Activated CD8-positive, alpha-beta T cell treated with anti-CD3 and anti-CD28 coated beads for 36 hours (primary cell): ENCODE measurements at regions of chr3 and their contacts with region 1.

Region 1: DNA sequence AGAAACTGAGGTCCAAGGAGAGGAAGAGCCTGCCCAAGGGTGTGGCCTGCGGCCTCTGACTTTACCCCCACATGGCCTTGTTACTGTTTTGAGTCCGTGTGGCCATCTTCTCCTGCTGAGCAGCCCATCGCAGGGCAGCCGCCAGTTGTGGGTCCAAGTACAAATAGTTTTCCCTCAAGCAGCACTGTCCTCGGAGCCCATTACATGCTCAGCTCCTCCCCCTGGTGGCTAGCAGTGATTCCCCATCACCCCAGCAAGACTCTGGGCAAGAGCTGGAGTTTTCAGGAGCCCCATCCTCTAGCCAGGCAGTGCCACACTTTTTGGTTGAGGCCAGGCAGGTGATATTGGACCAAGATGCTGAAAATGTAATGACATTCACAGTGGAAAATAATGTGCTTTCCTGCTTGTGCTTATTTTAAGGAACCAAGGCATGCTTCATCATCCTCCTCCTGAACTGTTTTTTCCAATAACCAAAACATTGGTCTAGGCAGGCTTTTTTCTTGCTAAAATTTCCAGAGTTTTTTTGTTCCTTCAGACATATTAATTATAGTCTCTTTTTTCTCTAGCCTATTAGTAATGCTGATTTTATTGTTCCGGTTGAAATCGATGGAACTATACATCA is 23.2 kb upstream of the VILL start:
- DNase-seq: peak; percentile 82
- ATAC-seq: peak; percentile 90
- H3K4me3 Mint-ChIP-seq: no peak overlapping the region
- H3K27ac Mint-ChIP-seq: no peak overlapping the region
- H3K4me1 Mint-ChIP-seq: no peaks in the 10 kb centered on the region
- H3K27me3 Mint-ChIP-seq: no peaks in the 10 kb centered on the region
- CTCF ChIP-seq: peak; percentile 71

Region 2: DNA sequence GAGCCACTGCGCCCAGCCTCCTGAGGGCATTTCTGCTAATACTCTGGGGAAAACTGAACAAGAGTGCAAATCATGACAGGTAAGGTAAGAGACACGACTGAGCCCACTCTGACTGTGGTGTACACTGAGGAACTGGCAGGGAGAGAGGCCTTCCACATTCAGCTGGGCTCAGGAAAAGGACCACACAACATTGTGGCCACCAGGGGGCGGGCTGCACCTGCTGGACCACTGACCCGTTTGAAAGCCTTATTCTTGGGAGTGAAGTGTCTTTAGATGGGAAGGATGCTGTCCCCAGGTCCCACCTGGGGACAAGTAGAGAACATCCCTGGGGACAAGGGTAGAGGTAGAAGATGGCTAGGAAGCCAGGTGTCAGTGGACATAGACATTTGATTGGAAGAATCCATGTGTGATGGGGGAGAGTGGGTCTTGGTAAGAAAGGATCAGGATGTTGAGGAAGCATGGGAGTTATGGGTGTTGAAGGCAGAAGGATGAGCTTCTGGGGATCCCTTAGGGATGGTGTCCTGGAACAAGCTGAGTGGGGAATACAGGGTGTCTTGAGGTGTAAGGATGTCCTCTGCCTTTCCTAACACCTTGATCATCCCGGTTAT is 111.9 kb before region 1 on chr3:
- CTCF ChIA-PET with region 1: interaction called, 29 read pairs
- POLR2A ChIA-PET with region 1: interaction called, 3 read pairs
- intact Hi-C with region 1: loop called (anchors 1 kb)
- DNase-seq: peak; percentile 88
- ATAC-seq: peak; percentile 37
- H3K4me3 Mint-ChIP-seq: no peak overlapping the region
- H3K27ac Mint-ChIP-seq: no peak overlapping the region
- H3K4me1 Mint-ChIP-seq: peaks cover 6% of the 10 kb centered on the region
- H3K27me3 Mint-ChIP-seq: peaks cover 1% of the 10 kb centered on the region
- CTCF ChIP-seq: peak; percentile 96

Region 3: DNA sequence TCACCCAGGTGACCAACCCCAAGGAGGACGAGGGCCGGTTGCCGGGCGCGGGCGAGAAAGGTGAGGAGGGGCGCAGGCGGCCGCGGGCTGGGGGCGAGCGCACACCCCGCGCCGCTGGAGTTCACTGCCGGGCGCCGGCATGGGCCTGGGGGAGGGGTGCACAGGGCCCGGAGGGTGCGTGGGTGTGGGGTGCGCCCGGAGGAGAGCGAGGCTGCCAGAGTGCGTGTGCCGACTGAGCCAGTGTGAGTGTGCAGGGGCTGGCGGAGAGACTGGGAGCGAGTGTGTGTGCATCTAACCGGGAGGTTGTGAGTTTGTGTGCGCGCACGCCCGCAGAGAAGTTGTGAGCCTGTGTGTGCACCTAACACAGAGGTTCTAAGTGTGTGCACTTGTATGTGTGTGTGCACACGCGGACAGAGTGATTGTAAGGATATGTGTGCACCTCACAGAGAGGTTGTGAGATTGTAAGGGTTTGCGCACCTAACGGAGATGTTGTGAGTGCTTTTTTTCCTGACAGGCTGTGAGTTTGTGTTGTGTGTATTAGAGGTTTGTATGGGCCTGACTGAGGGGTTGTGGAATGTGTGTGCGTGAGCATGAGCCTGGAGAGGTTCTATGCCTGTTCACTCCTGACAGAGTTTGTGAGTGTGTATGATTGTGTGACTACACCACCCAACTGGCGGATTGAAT is 105.0 kb before region 1 on chr3:
- CTCF ChIA-PET with region 1: interaction called, 15 read pairs
- POLR2A ChIA-PET with region 1: no interaction called
- intact Hi-C with region 1: no loop called
- DNase-seq: peak; percentile 56
- ATAC-seq: peak; percentile 35
- H3K4me3 Mint-ChIP-seq: peak overlapping the region; percentile 68
- H3K27ac Mint-ChIP-seq: no peak overlapping the region
- H3K4me1 Mint-ChIP-seq: peaks cover 22% of the 10 kb centered on the region
- H3K27me3 Mint-ChIP-seq: peaks cover 18% of the 10 kb centered on the region
- CTCF ChIP-seq: no peak

Region 4: GRCh38 chr3:37872413-37873160 is 94.8 kb before region 1 on chr3:
- CTCF ChIA-PET with region 1: interaction called, 21 read pairs
- POLR2A ChIA-PET with region 1: no interaction called
- intact Hi-C with region 1: no loop called
- DNase-seq: no peak
- ATAC-seq: no peak
- H3K4me3 Mint-ChIP-seq: no peak overlapping the region
- H3K27ac Mint-ChIP-seq: no peak overlapping the region
- H3K4me1 Mint-ChIP-seq: no peaks in the 10 kb centered on the region
- H3K27me3 Mint-ChIP-seq: peaks cover 5% of the 10 kb centered on the region
- CTCF ChIP-seq: no peak

Region 5: DNA sequence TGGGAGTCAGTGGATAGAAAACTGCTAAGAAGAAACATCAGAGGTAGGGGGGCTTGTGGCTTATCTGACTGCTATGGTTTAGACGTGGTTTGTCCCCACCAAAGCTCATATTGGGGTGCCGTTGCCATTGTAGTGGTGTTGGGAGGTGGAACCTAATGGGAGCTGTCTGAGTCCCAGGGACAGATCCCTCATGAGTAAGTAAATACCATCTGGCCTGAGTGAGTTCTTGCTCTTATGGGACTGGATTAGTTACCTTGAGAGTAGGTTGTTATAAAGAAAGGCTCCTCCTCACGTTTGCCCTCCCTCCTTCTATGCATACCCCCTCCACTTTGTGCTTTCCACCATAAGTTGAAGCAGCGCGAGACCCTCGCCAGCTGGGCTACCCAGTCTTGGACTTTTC is 30.2 kb before region 1 on chr3:
- CTCF ChIA-PET with region 1: interaction called, 19 read pairs
- POLR2A ChIA-PET with region 1: no interaction called
- intact Hi-C with region 1: no loop called
- DNase-seq: no peak
- ATAC-seq: no peak
- H3K4me3 Mint-ChIP-seq: no peak overlapping the region
- H3K27ac Mint-ChIP-seq: no peak overlapping the region
- H3K4me1 Mint-ChIP-seq: no peaks in the 10 kb centered on the region
- H3K27me3 Mint-ChIP-seq: no peaks in the 10 kb centered on the region
- CTCF ChIP-seq: no peak

Region 6: DNA sequence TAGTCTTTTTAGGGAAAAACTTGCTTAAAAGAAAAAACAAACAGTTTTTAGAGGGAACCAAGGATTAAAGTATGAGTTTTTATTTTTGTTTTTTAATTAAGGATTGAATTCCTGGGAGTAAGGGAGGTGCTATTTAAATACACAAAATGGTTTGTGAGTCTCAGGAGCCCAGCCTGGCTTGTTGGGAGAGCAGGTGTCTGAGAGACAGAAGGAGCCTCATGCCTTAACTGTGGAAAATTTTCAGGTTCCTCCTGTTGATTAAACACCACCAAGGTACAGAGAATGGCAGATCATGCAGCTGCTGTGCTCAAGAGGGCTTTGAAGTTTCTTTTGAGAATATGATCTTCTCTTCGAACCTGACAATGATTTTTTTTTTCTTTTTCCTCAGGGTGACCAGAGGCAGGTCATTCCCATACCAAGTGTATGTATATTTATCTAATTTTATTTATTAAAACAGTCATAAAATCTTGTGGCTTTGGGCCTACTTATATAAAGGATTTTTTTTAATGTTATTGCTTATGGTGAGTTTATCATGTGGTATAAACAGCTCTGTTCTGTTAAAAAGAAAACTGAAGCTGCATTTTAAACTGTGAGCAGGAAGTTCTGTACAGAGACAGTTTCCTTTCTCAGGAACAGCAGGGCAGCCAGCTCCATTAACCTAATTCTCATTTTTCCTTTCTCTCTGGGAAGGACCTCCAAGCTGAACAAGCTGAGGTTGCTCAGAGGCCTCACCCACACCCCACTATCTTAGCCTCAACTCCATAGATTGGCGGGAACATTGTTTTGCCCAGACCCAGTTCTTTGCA is 10.4 kb before region 1 on chr3:
- CTCF ChIA-PET with region 1: interaction called, 48 read pairs
- POLR2A ChIA-PET with region 1: interaction called, 3 read pairs
- intact Hi-C with region 1: no loop called
- DNase-seq: no peak
- ATAC-seq: no peak
- H3K4me3 Mint-ChIP-seq: no peak overlapping the region
- H3K27ac Mint-ChIP-seq: peak overlapping the region; percentile 82
- H3K4me1 Mint-ChIP-seq: peaks cover 19% of the 10 kb centered on the region
- H3K27me3 Mint-ChIP-seq: no peaks in the 10 kb centered on the region
- CTCF ChIP-seq: no peak

Region 7: DNA sequence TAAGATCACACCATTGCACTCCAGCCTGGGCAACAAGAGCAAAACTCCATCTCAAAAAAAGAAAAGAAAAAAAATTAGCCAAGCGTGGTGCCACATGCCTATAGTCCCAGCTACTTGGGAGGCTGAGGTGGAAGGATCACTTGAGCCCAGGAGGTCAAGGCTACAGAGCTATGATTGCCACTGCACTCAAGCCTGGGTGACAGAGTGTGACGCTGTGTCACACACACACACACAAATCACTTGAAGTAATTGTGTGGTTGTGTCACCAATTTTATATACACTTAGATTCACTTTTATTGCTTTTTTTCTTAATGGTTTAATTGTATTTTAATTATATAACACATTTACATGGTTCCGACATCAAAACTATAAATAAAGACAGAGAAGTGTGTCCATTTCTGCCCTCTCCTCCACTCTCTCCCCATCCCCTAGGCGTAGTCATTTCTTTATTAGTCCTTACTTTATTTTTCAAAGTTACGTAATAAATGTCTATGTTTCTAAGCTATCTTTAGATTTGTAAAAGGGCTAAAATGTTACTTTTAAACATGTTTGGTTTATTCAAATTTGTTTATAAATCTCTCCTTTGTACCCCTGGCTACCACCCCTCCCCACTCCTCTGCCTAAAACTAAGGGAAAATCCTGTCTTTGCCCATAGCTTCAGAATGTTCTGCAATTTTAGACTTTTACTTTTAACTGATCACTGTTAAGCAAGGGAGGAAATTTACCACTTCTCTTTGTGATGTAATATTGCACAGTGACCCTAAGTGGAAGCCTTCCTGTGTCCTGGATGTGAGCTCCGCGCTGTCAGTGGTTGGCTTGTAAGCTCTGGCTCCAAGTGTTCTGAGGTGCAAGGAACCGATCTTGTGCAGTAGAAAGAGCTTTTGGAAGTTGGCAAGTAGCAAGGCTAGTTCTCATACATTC is 12.4 kb after region 1 on chr3:
- CTCF ChIA-PET with region 1: interaction called, 65 read pairs
- POLR2A ChIA-PET with region 1: interaction called, 4 read pairs
- intact Hi-C with region 1: no loop called
- DNase-seq: no peak
- ATAC-seq: no peak
- H3K4me3 Mint-ChIP-seq: no peak overlapping the region
- H3K27ac Mint-ChIP-seq: no peak overlapping the region
- H3K4me1 Mint-ChIP-seq: peaks cover 3% of the 10 kb centered on the region
- H3K27me3 Mint-ChIP-seq: no peaks in the 10 kb centered on the region
- CTCF ChIP-seq: no peak

Region 8: DNA sequence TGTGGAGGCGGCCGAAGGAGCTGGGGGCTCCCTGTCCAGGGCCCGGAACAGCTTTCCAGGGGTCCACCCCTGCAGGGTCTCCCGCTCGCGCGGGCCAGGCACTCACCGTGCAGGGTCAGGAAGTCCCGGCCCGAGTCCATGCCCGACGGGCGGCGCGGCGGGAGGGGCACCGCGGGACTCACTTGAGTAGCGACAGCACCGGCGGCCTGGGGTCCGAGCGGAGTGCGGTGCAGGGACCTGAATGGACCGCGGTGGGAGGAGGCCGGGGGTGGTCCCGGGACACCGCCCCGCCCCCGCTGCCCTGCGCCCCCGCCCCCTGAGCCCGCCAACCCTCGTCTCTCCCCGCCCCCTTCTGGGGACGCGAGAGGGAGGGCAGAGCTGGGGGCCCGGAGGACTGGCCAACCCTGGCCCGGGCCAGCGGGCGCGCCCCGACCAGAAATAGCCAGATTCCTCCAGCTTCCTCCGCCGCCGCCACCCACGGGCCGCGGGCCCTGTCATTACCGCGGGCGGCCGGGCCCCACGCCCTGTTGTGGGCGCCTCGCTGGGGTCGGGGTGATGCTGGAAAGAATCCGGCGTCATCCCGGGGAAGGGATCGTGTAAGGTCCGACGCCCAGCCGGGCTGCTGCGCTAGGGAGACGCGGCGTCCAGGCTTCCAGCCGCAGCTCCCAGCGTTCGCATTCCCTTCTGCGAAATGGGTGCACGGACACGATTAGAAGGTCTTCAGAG is 62.2 kb after region 1 on chr3 and contains the start of gene PLCD1:
- CTCF ChIA-PET with region 1: no interaction called
- POLR2A ChIA-PET with region 1: no interaction called
- intact Hi-C with region 1: no loop called
- DNase-seq: peak; percentile 45
- ATAC-seq: no peak
- H3K4me3 Mint-ChIP-seq: peak within 1 kb of the TSS; percentile 14
- H3K27ac Mint-ChIP-seq: no peak within 1 kb of the TSS
- H3K4me1 Mint-ChIP-seq: peaks cover 24% of the 10 kb centered on the region
- H3K27me3 Mint-ChIP-seq: peaks cover 18% of the 10 kb centered on the region
- CTCF ChIP-seq: no peak
- total RNA-seq, gene PLCD1: 6.2 to 8.2 TPM

Region 9: GRCh38 chr3:38164966-38165680 is 197.8 kb after region 1 on chr3 and contains the start of gene OXSR1:
- CTCF ChIA-PET with region 1: no interaction called
- POLR2A ChIA-PET with region 1: no interaction called
- intact Hi-C with region 1: no loop called
- DNase-seq: peak; percentile 100
- ATAC-seq: peak; percentile 93
- H3K4me3 Mint-ChIP-seq: peak within 1 kb of the TSS; percentile 93
- H3K27ac Mint-ChIP-seq: peak within 1 kb of the TSS; percentile 99
- H3K4me1 Mint-ChIP-seq: peaks cover 42% of the 10 kb centered on the region
- H3K27me3 Mint-ChIP-seq: no peaks in the 10 kb centered on the region
- CTCF ChIP-seq: no peak
- total RNA-seq, gene OXSR1: 56.5 to 57.9 TPM

Region 10: DNA sequence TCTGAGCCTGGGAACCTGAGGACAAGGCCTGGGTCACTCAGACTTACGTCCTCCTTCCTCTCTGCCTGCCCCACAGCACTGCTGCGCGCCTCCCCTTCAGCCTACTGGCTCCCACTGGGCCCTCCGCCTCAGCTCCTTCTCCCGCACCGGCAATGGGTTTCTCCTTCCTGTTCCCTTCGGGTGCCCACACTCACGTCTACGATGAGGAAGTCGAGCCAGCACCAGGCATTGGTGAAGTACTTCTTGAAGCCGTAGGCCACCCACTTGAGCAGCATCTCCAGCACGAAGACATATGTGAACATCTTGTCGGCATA is 598.8 kb after region 1 on chr3:
- CTCF ChIA-PET with region 1: no interaction called
- POLR2A ChIA-PET with region 1: no interaction called
- intact Hi-C with region 1: no loop called
- DNase-seq: no peak
- ATAC-seq: no peak
- H3K4me3 Mint-ChIP-seq: no peak overlapping the region
- H3K27ac Mint-ChIP-seq: no peak overlapping the region
- H3K4me1 Mint-ChIP-seq: no peaks in the 10 kb centered on the region
- H3K27me3 Mint-ChIP-seq: no peaks in the 10 kb centered on the region
- CTCF ChIP-seq: no peak